Esophagus muscularis mucosa (tissue), 4 donors: ENCODE measurements at regions of chr4 and their contacts with region 1.

Region 1: DNA sequence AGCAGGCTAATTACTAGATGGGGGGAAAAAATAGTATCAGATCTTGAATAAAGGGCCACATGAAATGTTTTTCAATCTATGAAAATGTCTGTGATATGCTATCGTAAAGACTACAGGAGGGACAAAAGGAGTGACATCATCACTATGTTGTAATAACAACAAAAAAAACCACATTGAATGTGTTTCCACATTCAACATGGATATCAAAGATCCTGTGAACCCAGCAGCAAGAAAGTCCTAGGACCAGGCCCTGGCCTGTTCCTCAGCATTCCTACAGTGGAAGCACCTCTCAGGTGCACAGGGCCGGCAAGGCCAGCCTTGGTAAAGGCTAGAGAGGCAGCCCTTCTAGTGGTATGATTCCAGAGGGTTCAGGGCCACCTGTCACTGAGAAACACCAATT is 118.3 kb downstream of the RELL1 start:
- DNase-seq: peak; percentile 12
- H3K4me3 ChIP-seq: no peak overlapping the region
- H3K27ac ChIP-seq: no peak overlapping the region
- H3K4me1 ChIP-seq: no peaks in the 10 kb centered on the region
- H3K27me3 ChIP-seq: no peaks in the 10 kb centered on the region
- CTCF ChIP-seq: no peak
- EP300 ChIP-seq: no peak
- POLR2A ChIP-seq: no peak

Region 2: GRCh38 chr4:37452952-37453280 is 114.9 kb before region 1 on chr4:
- intact Hi-C with region 1: loop called (anchors 2 kb)
- DNase-seq: no peak
- H3K4me3 ChIP-seq: peak overlapping the region; percentile 53 to 68 (median 55)
- H3K27ac ChIP-seq: no peak overlapping the region
- H3K4me1 ChIP-seq: peaks cover 13 to 17% (median 16%) of the 10 kb centered on the region in 4 donors
- H3K27me3 ChIP-seq: peaks cover 0 to 63% (median 5%) of the 10 kb centered on the region in 4 donors
- CTCF ChIP-seq: peak; percentile 39 to 54 (median 44)
- EP300 ChIP-seq: no peak
- POLR2A ChIP-seq: no peak